ENCODE measurements at regions of chr7 and their contacts with region 1.

Region 1: GRCh38 chr7:14717816-14718215 is 184.7 kb downstream of the DGKB start:
- DNase-seq: peak; percentile 57
- ATAC-seq: peak; percentile 47
- H3K4me3 ChIP-seq: no peak overlapping the region
- H3K27ac ChIP-seq: peak overlapping the region; percentile 63
- H3K4me1 ChIP-seq: peaks cover 9% of the 10 kb centered on the region
- H3K27me3 ChIP-seq: no peaks in the 10 kb centered on the region
- CTCF ChIP-seq: peak; percentile 81

Region 2: GRCh38 chr7:14368285-14368684 is 349.5 kb before region 1 on chr7:
- CTCF ChIA-PET with region 1: no interaction called
- POLR2A ChIA-PET with region 1: no interaction called
- intact Hi-C with region 1: no loop called
- DNase-seq: peak; percentile 43
- ATAC-seq: 0 out of 2 replicates have a peak, but pooled peaks have one; percentile 22
- H3K4me3 ChIP-seq: no peak overlapping the region
- H3K27ac ChIP-seq: no peak overlapping the region
- H3K4me1 ChIP-seq: no peaks in the 10 kb centered on the region
- H3K27me3 ChIP-seq: no peaks in the 10 kb centered on the region
- CTCF ChIP-seq: no peak

Region 3: GRCh38 chr7:14761510-14762296 is 43.9 kb after region 1 on chr7:
- CTCF ChIA-PET with region 1: no interaction called
- POLR2A ChIA-PET with region 1: no interaction called
- intact Hi-C with region 1: loop called (anchors 2 kb)
- DNase-seq: peak; percentile 92
- ATAC-seq: peak; percentile 81
- H3K4me3 ChIP-seq: peak overlapping the region; percentile 32; the same call in 1 of the 2 replicates
- H3K27ac ChIP-seq: peak overlapping the region; percentile 96
- H3K4me1 ChIP-seq: peaks cover 54% of the 10 kb centered on the region
- H3K27me3 ChIP-seq: no peaks in the 10 kb centered on the region
- CTCF ChIP-seq: no peak

Region 4: GRCh38 chr7:14767716-14768425 is 50.1 kb after region 1 on chr7:
- CTCF ChIA-PET with region 1: no interaction called
- POLR2A ChIA-PET with region 1: no interaction called
- intact Hi-C with region 1: loop called (anchors 1 kb)
- DNase-seq: peak; percentile 89
- ATAC-seq: peak; percentile 90
- H3K4me3 ChIP-seq: peak overlapping the region; percentile 37
- H3K27ac ChIP-seq: peak overlapping the region; percentile 93
- H3K4me1 ChIP-seq: peaks cover 54% of the 10 kb centered on the region
- H3K27me3 ChIP-seq: no peaks in the 10 kb centered on the region
- CTCF ChIP-seq: no peak

Region 5: DNA sequence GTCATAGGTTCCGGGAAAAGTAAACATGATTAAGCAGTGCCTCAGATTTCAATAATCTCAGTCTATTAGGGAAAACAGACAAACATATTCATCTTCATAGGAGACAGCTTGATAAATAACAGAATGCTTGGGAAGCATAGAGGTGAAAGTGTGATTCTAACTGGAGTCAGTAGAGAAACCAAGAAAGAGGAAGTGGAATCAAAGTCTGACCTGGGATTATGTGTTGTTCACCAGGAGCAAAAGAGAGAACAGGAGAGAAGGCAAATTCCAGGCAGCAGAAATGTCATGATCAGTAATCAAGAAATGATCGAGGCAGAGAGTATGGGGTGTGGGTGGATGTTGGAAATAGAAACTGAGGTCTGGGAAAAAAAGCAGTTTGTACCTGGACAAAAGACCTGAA is 141.1 kb after region 1 on chr7:
- CTCF ChIA-PET with region 1: no interaction called
- POLR2A ChIA-PET with region 1: interaction called, 8 read pairs
- intact Hi-C with region 1: loop called (anchors 5 kb)
- DNase-seq: peak; percentile 4
- ATAC-seq: peak; percentile 56
- H3K4me3 ChIP-seq: peak overlapping the region; percentile 4; the same call in 1 of the 2 replicates
- H3K27ac ChIP-seq: no peak overlapping the region; the same call in 1 of the 2 replicates
- H3K4me1 ChIP-seq: peaks cover 14% of the 10 kb centered on the region
- H3K27me3 ChIP-seq: no peaks in the 10 kb centered on the region
- CTCF ChIP-seq: no peak

Region 6: GRCh38 chr7:14924398-14924797 is 206.6 kb after region 1 on chr7:
- CTCF ChIA-PET with region 1: interaction called, 13 read pairs
- POLR2A ChIA-PET with region 1: no interaction called
- intact Hi-C with region 1: loop called (anchors 1 kb)
- DNase-seq: peak; percentile 62
- ATAC-seq: peak; percentile 67
- H3K4me3 ChIP-seq: peak overlapping the region; percentile 45; the same call in 1 of the 2 replicates
- H3K27ac ChIP-seq: no peak overlapping the region
- H3K4me1 ChIP-seq: peaks cover 5% of the 10 kb centered on the region; the same call in 1 of the 2 replicates
- H3K27me3 ChIP-seq: no peaks in the 10 kb centered on the region
- CTCF ChIP-seq: peak; percentile 61

Region 7: GRCh38 chr7:15178065-15178464 is 460.2 kb after region 1 on chr7:
- CTCF ChIA-PET with region 1: no interaction called
- POLR2A ChIA-PET with region 1: no interaction called
- intact Hi-C with region 1: no loop called
- DNase-seq: peak; percentile 19
- ATAC-seq: peak; percentile 51
- H3K4me3 ChIP-seq: no peak overlapping the region
- H3K27ac ChIP-seq: no peak overlapping the region
- H3K4me1 ChIP-seq: no peaks in the 10 kb centered on the region
- H3K27me3 ChIP-seq: no peaks in the 10 kb centered on the region
- CTCF ChIP-seq: no peak

Region 8: DNA sequence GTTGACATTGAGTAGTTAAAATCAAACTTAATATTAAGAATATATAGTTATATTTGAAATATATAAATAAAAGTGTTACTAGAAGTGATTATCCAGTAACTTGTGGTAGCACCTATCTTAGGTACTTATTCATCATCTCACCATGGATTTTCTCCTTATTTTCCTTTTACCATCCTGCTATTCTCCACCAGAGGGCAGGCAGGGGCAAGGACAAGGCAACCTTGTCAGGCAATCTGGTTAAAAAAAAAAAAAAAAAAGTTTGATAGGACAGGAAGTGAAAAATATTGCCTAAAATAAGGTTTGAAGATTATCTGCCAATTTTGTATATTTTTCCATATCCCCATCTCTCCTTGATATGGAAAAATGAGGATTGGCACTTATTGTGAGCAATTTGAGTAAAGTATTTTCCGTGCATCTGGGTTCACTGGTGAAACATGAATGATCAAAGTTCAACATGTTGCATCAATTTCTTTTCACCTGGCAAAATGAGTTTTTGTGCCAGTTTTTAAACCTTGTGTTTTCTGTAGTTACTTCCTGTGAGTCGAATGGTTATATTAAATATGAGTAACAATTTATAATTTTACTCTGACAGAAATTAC is 587.3 kb after region 1 on chr7:
- CTCF ChIA-PET with region 1: no interaction called
- POLR2A ChIA-PET with region 1: no interaction called
- intact Hi-C with region 1: loop called (anchors 5 kb)
- DNase-seq: peak; percentile 62
- ATAC-seq: no peak
- H3K4me3 ChIP-seq: no peak overlapping the region
- H3K27ac ChIP-seq: no peak overlapping the region
- H3K4me1 ChIP-seq: no peaks in the 10 kb centered on the region
- H3K27me3 ChIP-seq: no peaks in the 10 kb centered on the region
- CTCF ChIP-seq: peak; percentile 66

Region 9: GRCh38 chr7:15452670-15453069 is 734.9 kb after region 1 on chr7:
- CTCF ChIA-PET with region 1: no interaction called
- POLR2A ChIA-PET with region 1: no interaction called
- intact Hi-C with region 1: no loop called
- DNase-seq: no peak
- ATAC-seq: no peak
- H3K4me3 ChIP-seq: no peak overlapping the region
- H3K27ac ChIP-seq: no peak overlapping the region
- H3K4me1 ChIP-seq: no peaks in the 10 kb centered on the region; the same call in 1 of the 2 replicates
- H3K27me3 ChIP-seq: no peaks in the 10 kb centered on the region
- CTCF ChIP-seq: no peak